ENCODE measurements at regions of chr14 and their contacts with region 1.

Region 1: DNA sequence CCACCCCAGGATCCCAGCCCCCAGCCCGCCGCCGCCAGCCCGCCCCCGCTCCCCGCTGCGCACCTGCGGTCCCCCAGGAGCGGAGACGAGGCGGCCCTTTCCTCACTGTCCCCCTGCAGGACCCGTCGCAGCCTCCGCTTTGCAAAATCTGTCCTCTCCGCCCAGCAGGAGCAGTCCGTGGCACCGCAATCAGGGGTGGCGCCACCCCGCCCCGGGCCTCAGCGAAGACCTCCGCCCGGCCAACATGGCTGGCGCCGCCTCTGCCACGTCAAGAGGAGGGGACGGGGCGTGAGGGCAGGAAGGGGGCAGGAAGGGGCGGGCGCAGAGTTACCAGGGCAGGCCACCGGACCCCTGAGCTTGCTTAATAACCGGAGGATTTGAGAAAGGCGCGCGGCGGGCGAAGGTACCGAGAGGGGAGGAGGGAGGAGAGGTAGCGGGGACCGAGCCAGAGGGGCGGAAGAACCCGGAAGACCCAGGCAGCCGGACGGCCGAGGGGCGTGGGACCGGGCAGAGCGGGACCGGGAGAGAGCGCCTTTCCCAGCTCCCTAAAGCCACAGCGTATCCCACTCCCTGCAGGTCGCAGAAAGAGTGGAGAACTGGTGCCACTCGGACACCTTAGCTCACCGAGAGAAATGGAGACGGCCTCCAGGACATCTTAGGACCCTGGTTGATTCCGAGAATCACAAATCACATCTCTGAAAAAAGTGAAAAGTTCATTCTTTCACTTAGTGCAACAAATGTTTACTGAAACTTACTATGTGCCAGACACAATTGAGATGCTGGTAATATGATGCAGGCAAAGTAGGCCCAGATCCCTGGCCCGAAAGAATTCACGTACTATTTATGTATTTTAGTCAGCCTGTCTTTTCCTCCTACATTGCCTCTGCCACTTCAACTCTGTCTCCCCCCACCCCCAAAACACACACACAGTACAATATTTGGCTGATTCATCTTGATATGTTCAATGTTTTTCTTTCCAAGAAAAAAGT is at the start of gene SEC23A:
- DNase-seq: peak; percentile 84
- ATAC-seq: peak; percentile 91
- H3K4me3 ChIP-seq: peak within 1 kb of the TSS; percentile 94
- H3K27ac ChIP-seq: peak within 1 kb of the TSS; percentile 74
- H3K4me1 ChIP-seq: peaks cover 15% of the 10 kb centered on the region
- H3K27me3 ChIP-seq: no peaks in the 10 kb centered on the region
- CTCF ChIP-seq: no peak
- total RNA-seq, gene SEC23A: 58.2 and 67.0 TPM in 2 replicates

Region 2: DNA sequence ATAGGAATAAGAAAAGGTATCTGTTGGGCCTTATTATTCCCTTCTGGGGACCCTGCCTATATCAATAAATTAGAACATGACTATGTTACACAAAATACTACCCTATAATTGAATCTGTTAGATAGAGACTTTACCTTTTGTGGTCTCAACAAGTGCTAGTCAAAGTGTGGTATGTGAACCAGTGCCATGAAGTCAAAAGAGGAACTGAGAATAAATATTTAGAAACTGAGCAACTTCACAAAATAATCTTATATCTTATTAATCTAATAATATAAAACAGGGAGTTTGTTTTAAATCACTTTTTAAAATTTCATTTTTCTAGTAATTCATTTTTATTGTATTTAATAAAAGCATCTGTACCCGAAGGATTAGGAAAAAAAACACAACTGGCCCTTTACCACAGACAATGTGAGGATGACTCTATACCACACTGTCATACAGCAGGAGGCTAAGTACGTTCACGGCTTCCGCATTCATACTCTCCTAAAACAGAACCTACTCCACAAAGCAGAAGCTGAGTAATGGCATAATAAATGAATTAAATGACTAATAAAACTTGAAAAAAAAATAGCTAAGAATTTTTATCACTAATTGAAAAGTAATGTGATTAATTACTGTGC is 42.3 kb before region 1 on chr14:
- CTCF ChIA-PET with region 1: no interaction called
- POLR2A ChIA-PET with region 1: no interaction called
- intact Hi-C with region 1: no loop called
- DNase-seq: no peak
- ATAC-seq: no peak
- H3K4me3 ChIP-seq: no peak overlapping the region
- H3K27ac ChIP-seq: no peak overlapping the region
- H3K4me1 ChIP-seq: no peaks in the 10 kb centered on the region
- H3K27me3 ChIP-seq: no peaks in the 10 kb centered on the region
- CTCF ChIP-seq: no peak

Region 3: DNA sequence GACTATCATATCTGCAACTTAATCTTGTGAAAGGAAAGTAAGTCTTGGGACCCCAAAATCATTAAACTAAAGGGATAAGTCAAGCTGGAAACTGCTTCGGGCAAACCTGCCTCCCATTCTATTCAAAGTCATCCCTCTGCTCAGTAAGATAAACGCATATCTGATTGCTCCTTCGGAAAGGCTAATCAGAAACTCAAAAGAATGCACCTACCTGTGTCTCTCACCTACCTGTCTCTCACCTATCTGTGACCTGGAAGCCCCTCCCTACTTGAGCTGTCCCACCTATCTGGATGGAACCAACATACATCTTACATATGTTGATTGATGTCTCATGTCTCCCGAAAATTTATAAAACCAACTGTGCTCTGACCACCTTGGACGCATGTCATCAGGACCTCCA is 20.1 kb before region 1 on chr14:
- CTCF ChIA-PET with region 1: no interaction called
- POLR2A ChIA-PET with region 1: no interaction called
- intact Hi-C with region 1: no loop called
- DNase-seq: no peak
- ATAC-seq: no peak
- H3K4me3 ChIP-seq: no peak overlapping the region
- H3K27ac ChIP-seq: no peak overlapping the region
- H3K4me1 ChIP-seq: no peaks in the 10 kb centered on the region
- H3K27me3 ChIP-seq: no peaks in the 10 kb centered on the region
- CTCF ChIP-seq: no peak

Region 4: DNA sequence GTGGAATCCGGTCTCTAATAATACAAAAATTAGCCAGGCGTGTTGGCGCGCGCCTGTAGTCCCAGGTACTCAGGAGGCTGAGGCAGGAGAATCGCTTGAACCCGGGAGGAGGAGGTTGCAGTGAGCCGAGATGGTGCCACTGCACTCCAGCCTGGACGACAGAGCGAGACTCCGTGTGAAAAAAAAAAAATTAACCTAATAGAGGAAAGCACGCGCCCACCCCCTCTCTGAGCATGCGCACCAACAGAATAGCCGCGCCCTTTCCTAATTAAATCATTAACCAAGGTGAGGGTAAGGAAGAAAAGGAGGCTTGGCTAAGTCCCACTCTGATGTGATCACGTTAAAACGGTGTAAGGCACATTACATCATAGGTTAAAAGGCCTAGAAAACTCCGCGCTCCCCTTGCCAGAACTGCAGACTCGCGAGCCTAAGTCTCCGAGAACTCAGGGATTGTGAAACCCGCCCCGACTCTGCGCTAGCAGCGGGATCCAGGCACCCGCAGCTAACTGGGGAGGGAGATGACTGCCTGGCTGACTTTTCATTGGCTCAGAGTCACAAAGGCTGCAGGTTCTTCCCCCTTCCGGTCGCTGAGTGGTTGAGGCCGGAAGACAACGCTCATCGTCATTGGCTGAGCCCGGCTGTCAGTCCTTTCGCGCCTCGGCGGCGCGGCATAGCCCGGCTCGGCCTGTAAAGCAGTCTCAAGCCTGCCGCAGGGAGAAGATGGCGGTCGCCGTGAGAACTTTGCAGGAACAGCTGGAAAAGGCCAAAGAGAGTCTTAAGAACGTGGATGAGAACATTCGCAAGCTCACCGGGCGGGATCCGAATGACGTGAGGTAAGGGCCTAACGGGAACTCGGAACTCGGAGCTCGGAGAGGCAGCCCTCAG is 71.5 kb after region 1 on chr14 and contains the start of gene PNN:
- CTCF ChIA-PET with region 1: interaction called, 4 read pairs
- POLR2A ChIA-PET with region 1: no interaction called
- intact Hi-C with region 1: loop called (anchors 2 kb)
- DNase-seq: peak; percentile 99
- ATAC-seq: peak; percentile 89
- H3K4me3 ChIP-seq: peak within 1 kb of the TSS; percentile 96
- H3K27ac ChIP-seq: peak within 1 kb of the TSS; percentile 51
- H3K4me1 ChIP-seq: peaks cover 17% of the 10 kb centered on the region
- H3K27me3 ChIP-seq: no peaks in the 10 kb centered on the region
- CTCF ChIP-seq: no peak
- total RNA-seq, gene PNN: 36.7 and 45.6 TPM in 2 replicates

Region 5: GRCh38 chr14:39218171-39218806 is 115.0 kb after region 1 on chr14:
- CTCF ChIA-PET with region 1: no interaction called
- POLR2A ChIA-PET with region 1: no interaction called
- intact Hi-C with region 1: no loop called
- DNase-seq: peak; percentile 98
- ATAC-seq: peak; percentile 86
- H3K4me3 ChIP-seq: peak overlapping the region; percentile 32; the same call in 1 of the 2 replicates
- H3K27ac ChIP-seq: peak overlapping the region; percentile 91
- H3K4me1 ChIP-seq: peaks cover 41% of the 10 kb centered on the region
- H3K27me3 ChIP-seq: no peaks in the 10 kb centered on the region
- CTCF ChIP-seq: no peak

Region 6: DNA sequence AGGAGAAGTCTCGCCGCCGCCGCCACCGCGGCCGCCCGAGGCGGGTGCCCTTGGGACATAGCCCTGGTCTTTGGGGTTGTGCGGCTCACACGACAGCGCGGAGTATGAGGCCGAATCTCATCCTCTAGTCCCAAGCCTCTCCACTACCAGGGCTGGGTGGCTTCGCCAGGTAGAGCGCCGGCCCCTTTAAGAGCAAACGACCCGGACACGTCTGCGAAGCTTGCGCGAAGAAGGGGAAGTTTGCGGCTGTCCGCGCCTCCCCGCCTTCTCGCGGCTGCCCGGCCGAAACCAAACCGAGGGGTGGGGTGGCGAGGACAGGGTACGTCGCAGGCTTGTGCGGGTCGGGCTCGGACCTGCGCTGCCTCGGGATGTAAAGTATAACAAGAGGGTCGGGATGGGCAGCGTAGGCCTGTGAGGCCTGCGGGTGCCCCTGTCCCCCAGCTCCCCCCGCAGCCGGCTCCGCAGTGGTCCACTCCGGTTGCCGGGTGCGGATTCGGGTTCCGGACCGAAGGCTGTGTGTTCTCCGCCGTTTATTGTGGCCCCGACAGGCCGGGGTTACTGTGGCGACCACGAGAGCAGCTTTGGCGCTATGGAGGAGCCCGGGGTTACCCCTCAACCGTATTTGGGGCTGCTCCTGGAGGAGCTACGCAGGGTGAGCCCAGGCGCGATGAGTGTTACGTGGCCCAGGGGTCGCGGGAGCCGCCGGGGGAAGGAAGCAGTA is 163.8 kb after region 1 on chr14:
- CTCF ChIA-PET with region 1: no interaction called
- POLR2A ChIA-PET with region 1: no interaction called
- intact Hi-C with region 1: loop called (anchors 1 kb)
- DNase-seq: peak; percentile 84
- ATAC-seq: peak; percentile 87
- H3K4me3 ChIP-seq: peak overlapping the region; percentile 95
- H3K27ac ChIP-seq: peak overlapping the region; percentile 83
- H3K4me1 ChIP-seq: peaks cover 27% of the 10 kb centered on the region
- H3K27me3 ChIP-seq: no peaks in the 10 kb centered on the region
- CTCF ChIP-seq: no peak

Region 7: GRCh38 chr14:39368261-39368959 is 265.1 kb after region 1 on chr14:
- CTCF ChIA-PET with region 1: no interaction called
- POLR2A ChIA-PET with region 1: no interaction called
- intact Hi-C with region 1: loop called (anchors 1 kb)
- DNase-seq: peak; percentile 78
- ATAC-seq: peak; percentile 76
- H3K4me3 ChIP-seq: no peak overlapping the region
- H3K27ac ChIP-seq: no peak overlapping the region
- H3K4me1 ChIP-seq: no peaks in the 10 kb centered on the region
- H3K27me3 ChIP-seq: no peaks in the 10 kb centered on the region
- CTCF ChIP-seq: peak; percentile 81

Region 8: DNA sequence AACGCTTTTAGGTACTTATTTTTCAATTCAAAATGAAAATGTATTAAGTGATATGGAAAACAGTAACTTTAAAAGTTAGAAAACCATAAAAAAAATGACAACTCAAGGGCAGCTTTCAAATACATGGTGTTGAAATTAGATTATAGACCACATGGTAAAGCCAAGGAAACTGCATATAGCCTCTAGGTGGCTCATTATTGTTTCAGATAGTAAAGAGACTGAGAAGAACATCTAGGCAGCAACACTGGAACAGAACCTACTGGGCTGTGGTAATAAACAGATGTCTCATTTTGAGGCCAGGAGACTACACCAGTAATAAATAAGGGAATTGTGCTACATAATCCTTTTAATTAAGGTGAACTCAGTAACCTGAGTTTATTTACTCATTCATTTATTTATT is 316.0 kb after region 1 on chr14:
- CTCF ChIA-PET with region 1: no interaction called
- POLR2A ChIA-PET with region 1: no interaction called
- intact Hi-C with region 1: no loop called
- DNase-seq: no peak
- ATAC-seq: peak; percentile 59
- H3K4me3 ChIP-seq: no peak overlapping the region
- H3K27ac ChIP-seq: no peak overlapping the region
- H3K4me1 ChIP-seq: no peaks in the 10 kb centered on the region
- H3K27me3 ChIP-seq: no peaks in the 10 kb centered on the region
- CTCF ChIP-seq: peak; percentile 48

Region 9: GRCh38 chr14:39432179-39432618 is 328.9 kb after region 1 on chr14 and contains the start of gene FBXO33:
- CTCF ChIA-PET with region 1: interaction called, 4 read pairs
- POLR2A ChIA-PET with region 1: interaction called, 5 read pairs
- intact Hi-C with region 1: loop called (anchors 2 kb)
- DNase-seq: peak; percentile 92
- ATAC-seq: peak; percentile 80
- H3K4me3 ChIP-seq: peak within 1 kb of the TSS; percentile 95
- H3K27ac ChIP-seq: peak within 1 kb of the TSS; percentile 96
- H3K4me1 ChIP-seq: peaks cover 25% of the 10 kb centered on the region
- H3K27me3 ChIP-seq: no peaks in the 10 kb centered on the region
- CTCF ChIP-seq: no peak
- total RNA-seq, gene FBXO33: 21.9 and 26.9 TPM in 2 replicates